GM10248 (cell line): ENCODE measurements at regions of chr15 and their contacts with region 1.

Region 1: DNA sequence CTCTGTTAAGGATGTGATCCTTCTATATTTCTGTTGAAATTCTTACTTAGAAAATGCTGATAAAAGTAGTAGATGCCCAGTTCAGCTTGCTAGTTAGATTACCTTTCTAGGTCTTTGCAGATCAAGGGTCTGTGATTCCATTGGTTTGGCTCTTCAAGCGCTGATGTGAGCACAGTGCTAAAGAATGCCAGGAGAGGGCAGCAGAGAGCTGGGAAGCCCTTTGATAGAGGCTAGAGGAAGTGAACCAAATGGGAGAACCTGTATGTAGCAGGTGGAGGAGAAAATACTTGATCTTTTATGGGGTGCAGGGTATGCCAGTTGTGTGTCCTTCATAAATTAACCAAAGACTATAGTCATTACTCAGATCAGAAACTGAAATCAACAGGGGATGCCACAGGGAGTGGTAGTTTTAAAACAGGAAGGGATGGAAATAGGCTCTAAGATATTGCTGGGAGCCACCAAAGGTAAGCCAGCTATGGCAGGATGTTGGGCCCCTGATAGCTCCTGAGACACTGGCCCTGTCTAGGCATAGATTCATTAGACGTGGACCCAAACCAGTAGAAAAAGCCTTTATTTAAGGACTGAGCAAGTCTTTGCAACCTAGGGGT is 677.4 kb downstream of the SQOR start:
- DNase-seq: peak; percentile 25
- CTCF ChIP-seq: peak; percentile 92

Region 2: GRCh38 chr15:46297766-46298165 is 14.5 kb before region 1 on chr15:
- CTCF ChIA-PET with region 1: interaction called, 66 read pairs
- POLR2A ChIA-PET with region 1: no interaction called
- DNase-seq: no peak
- CTCF ChIP-seq: no peak

Region 3: DNA sequence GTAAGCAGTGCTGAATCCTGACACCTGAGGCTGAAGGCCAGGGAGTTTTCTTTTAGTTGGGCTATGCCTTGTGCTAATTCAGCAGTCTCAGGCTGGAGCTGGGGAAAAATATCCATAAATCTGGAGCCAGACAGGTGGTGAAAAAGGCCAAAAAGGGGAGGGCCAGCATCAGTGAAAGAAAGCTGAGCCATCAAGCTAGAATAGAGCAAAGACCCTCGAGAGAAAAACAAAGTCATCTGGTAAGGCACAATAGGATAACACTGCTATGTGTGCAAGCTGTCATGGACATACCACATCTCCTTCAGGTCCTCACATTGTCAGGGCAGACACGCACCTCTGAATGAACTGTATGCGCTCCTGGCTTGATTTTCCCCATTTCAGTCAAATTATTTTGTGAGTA is 10.5 kb after region 1 on chr15:
- CTCF ChIA-PET with region 1: interaction called, 49 read pairs
- POLR2A ChIA-PET with region 1: no interaction called
- DNase-seq: no peak
- CTCF ChIP-seq: no peak